T-cell (primary cell): ENCODE measurements at regions of chr20 and their contacts with region 1.

Region 1: GRCh38 chr20:5642155-5642981 is 107.8 kb upstream of the SHLD1 start:
- DNase-seq: no peak
- ATAC-seq: no peak
- H3K4me3 ChIP-seq: no peak overlapping the region
- H3K4me3 Mint-ChIP-seq: peak overlapping the region in 1 of 3 donors; percentile 24
- H3K27ac ChIP-seq: no peak overlapping the region
- H3K27ac Mint-ChIP-seq: peak overlapping the region; percentile 36 to 56
- H3K4me1 ChIP-seq: peaks cover 12 to 25% of the 10 kb centered on the region in 2 experiments
- H3K4me1 Mint-ChIP-seq: peaks cover 27 to 37% (median 36%) of the 10 kb centered on the region in 3 donors
- H3K27me3 ChIP-seq: no peaks in the 10 kb centered on the region
- H3K27me3 Mint-ChIP-seq: no peaks in the 10 kb centered on the region

Region 2: DNA sequence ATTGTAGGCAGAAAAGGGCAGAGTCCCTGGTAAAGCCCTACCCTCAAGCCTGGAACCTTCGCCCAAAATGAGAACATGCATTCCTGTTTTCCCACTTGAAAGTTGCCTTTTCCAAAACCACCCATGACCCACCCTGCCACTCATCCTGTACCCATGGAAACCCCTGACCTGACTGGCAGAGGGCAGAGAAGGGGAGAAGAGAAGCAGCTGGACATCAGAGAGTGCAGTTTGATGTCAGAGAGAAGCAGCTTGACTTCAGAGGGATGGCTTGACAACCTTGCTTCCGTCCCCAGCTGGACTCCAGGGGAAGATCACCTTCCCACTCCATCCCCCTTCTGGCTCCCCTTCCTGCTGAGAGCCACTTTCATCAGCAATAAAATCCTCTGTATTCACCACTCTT is 15.8 kb before region 1 on chr20:
- CTCF ChIA-PET with region 1: interaction called in 1 of 2 experiments, 10 read pairs
- POLR2A ChIA-PET with region 1: interaction called in 1 of 2 experiments, 6 read pairs
- DNase-seq: no peak
- ATAC-seq: no peak
- H3K4me3 ChIP-seq: no peak overlapping the region
- H3K4me3 Mint-ChIP-seq: no peak overlapping the region
- H3K27ac ChIP-seq: no peak overlapping the region
- H3K27ac Mint-ChIP-seq: no peak overlapping the region
- H3K4me1 ChIP-seq: no peaks in the 10 kb centered on the region
- H3K4me1 Mint-ChIP-seq: peaks cover 0 to 3% (median 0%) of the 10 kb centered on the region in 3 donors
- H3K27me3 ChIP-seq: no peaks in the 10 kb centered on the region
- H3K27me3 Mint-ChIP-seq: no peaks in the 10 kb centered on the region